ENCODE measurements at regions of chr7 and their contacts with region 1.

Region 1: GRCh38 chr7:128425850-128426249 is 16.1 kb upstream of the IMPDH1 start:
- DNase-seq: peak; percentile 77
- CTCF ChIP-seq: peak; percentile 91

Region 2: GRCh38 chr7:128045766-128046165 is 380.1 kb before region 1 on chr7:
- CTCF ChIA-PET with region 1: no interaction called
- POLR2A ChIA-PET with region 1: no interaction called
- DNase-seq: no peak
- CTCF ChIP-seq: no peak

Region 3: GRCh38 chr7:128247676-128248194 is 178.1 kb before region 1 on chr7:
- CTCF ChIA-PET with region 1: no interaction called
- POLR2A ChIA-PET with region 1: no interaction called
- DNase-seq: no peak
- CTCF ChIP-seq: no peak

Region 4: GRCh38 chr7:128437426-128438332 is 11.8 kb after region 1 on chr7:
- CTCF ChIA-PET with region 1: interaction called, 83 read pairs
- POLR2A ChIA-PET with region 1: no interaction called
- DNase-seq: peak; percentile 43
- CTCF ChIP-seq: no peak

Region 5: GRCh38 chr7:128443831-128444600 is 18.2 kb after region 1 on chr7:
- CTCF ChIA-PET with region 1: interaction called, 88 read pairs
- POLR2A ChIA-PET with region 1: no interaction called
- DNase-seq: no peak
- CTCF ChIP-seq: no peak

Region 6: DNA sequence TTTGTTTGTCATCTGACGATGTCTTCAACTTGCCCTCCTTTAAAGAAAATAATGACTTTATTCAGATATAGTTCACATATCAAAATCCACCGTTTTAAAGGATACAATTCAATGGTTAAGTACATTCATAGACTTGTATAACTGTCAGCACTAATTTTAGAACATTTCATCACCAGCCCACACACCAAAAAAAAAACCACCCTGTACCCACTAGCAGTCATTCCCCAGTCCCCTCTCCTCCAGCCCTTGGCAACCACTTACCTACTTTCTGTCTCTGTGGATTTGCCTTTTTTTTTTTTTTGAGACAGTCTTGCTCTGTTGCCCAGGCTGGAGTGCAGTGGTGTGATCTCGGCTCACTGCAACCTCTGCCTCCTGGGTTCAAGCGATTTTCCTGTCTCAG is 24.6 kb after region 1 on chr7:
- CTCF ChIA-PET with region 1: interaction called, 143 read pairs
- POLR2A ChIA-PET with region 1: no interaction called
- DNase-seq: no peak
- CTCF ChIP-seq: no peak